Natural killer cell (primary cell): ENCODE measurements at regions of chr3 and their contacts with region 1.

Region 1: DNA sequence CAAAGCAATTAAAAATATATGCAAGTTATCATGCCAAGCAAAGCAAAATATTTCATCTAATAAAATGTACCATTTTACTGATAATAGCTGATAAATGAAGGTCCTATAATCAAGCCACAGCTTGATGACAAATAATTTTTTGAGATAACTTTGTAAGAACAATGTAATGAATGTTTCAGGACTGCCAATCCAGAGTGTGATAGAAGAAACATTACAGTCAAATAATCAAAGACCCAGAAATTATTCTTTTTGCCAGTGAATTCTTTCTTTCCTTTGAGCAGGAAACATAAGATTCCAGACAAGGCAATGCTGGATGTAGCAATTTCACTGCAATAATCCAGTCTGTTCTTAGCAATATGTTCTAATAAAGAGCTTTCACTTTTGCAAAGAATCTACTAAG is 556.1 kb downstream of the PLOD2 start:
- DNase-seq: no peak
- ATAC-seq: no peak
- H3K4me3 ChIP-seq: no peak overlapping the region
- H3K4me3 Mint-ChIP-seq: no peak overlapping the region
- H3K27ac ChIP-seq: no peak overlapping the region
- H3K27ac Mint-ChIP-seq: no peak overlapping the region
- H3K4me1 ChIP-seq: no peaks in the 10 kb centered on the region
- H3K4me1 Mint-ChIP-seq: no peaks in the 10 kb centered on the region
- H3K27me3 ChIP-seq: no peaks in the 10 kb centered on the region
- H3K27me3 Mint-ChIP-seq: no peaks in the 10 kb centered on the region
- CTCF ChIP-seq: no peak

Region 2: DNA sequence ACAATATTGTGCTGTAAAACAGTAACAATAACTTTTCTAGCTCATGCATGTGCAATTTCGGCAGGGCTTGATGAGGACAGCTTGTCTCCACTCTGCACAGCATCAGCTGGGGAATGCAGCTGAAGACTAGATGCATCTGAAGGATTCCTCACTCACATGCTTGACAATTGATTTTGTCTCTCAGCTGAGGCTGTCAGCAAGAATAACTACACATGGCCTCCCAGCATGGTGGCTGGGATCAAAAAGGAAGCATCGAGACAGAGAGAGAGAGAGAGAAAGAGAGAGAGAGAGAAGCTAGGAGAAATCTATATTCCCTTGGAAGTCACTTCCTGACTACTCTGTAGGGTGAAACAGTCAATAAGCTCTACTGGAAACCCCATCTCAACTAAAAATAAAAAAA is 69.0 kb after region 1 on chr3:
- intact Hi-C with region 1: loop called (anchors 2 kb)
- DNase-seq: no peak
- ATAC-seq: no peak
- H3K4me3 ChIP-seq: no peak overlapping the region
- H3K4me3 Mint-ChIP-seq: no peak overlapping the region
- H3K27ac ChIP-seq: no peak overlapping the region
- H3K27ac Mint-ChIP-seq: no peak overlapping the region
- H3K4me1 ChIP-seq: no peaks in the 10 kb centered on the region
- H3K4me1 Mint-ChIP-seq: no peaks in the 10 kb centered on the region
- H3K27me3 ChIP-seq: no peaks in the 10 kb centered on the region
- H3K27me3 Mint-ChIP-seq: no peaks in the 10 kb centered on the region
- CTCF ChIP-seq: no peak

Region 3: GRCh38 chr3:145716519-145716918 is 111.7 kb after region 1 on chr3:
- intact Hi-C with region 1: no loop called
- DNase-seq: no peak
- ATAC-seq: no peak
- H3K4me3 ChIP-seq: no peak overlapping the region
- H3K4me3 Mint-ChIP-seq: no peak overlapping the region
- H3K27ac ChIP-seq: no peak overlapping the region
- H3K27ac Mint-ChIP-seq: no peak overlapping the region
- H3K4me1 ChIP-seq: no peaks in the 10 kb centered on the region
- H3K4me1 Mint-ChIP-seq: no peaks in the 10 kb centered on the region
- H3K27me3 ChIP-seq: no peaks in the 10 kb centered on the region
- H3K27me3 Mint-ChIP-seq: no peaks in the 10 kb centered on the region
- CTCF ChIP-seq: no peak